ENCODE measurements at regions of chr13 and their contacts with region 1.

Region 1: DNA sequence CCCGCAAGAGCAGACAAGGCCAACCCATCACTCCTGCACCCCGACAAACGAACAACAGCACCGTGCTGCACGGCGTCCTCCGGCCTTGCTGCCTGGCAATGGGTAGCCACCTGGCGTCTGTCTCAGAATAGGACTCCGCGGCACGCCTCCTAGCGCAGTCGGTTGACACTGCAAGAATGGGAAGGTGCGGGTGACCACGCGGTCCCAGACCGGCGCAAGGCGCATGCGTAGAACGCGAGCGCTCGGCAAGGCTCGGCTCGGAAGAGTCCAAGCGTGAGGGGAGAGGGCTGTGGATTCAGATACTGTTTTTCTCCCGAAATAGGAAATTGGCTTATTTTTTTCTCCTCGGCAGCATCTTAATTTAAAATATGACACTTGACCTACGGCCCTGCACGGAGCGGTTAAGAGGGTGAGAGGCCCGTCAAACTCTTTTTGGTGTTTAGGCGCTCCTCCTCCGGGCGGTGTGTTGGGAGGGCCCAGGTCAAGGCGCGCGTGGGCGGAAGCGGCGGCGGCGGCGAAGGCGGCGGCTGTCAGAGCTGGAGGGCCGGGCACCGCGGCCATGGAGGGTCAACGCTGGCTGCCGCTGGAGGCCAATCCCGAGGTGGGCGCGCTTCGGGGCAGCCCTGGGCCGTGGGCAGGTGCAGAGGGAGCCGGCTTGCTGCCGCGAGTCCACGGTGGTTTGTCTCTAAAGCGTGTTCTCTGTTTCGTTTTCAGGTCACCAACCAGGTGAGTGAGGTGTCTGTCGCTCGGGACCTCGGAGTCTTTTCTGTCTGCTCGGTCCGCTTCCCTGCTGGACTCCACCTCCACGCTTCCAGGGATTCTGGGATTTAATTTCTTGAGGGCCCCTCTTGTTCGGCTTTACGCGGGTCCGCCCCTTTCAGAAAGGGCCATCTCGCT is at the start of gene UCHL3:
- DNase-seq: peak; percentile 97 to 99 (median 99)
- ATAC-seq: peak; percentile 98 to 99
- H3K4me3 ChIP-seq: peak within 1 kb of the TSS; percentile 70
- H3K27ac ChIP-seq: peak within 1 kb of the TSS; percentile 49
- H3K4me1 ChIP-seq: no peaks in the 10 kb centered on the region
- H3K27me3 ChIP-seq: no peaks in the 10 kb centered on the region
- total RNA-seq, gene UCHL3: 16.2 to 25.4 (median 16.6) TPM

Region 2: DNA sequence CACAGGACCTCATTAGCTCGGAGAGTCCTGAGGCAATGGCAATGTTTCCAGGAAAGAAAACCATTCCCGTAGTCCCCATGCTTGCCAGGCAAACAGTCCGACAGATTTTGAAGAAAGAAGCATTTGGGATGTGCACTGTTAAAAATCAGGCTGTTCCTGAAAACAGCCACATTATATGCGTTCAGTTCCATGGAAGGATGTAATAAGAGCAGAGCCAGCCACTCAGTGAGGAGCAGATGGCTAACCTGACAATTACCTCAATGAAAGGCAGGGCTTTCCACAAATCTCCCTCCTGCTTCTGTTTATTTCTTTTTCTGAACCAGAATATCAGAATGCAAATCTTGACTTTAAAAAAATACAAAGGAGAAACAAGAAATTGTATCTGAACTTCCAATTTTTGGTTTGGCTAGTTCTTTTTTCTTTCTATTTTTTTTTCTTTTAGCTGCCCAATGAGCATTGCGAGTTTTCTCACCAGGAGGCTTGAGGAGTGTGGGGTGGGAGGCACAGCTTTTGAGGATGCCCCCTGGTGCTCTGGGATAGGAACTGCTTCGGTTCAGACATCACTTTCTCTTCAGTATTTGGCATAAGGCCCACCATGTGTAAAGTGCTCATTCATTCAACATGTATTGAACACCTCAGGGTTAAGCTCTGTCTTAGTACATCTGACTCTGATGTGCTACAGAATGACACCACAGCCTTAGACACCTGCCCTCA is 191.8 kb before region 1 on chr13:
- intact Hi-C with region 1: loop called in 1 of 4 experiments (anchors 10 kb)
- DNase-seq: peak in 2 of 3 donors; percentile 28 to 45
- ATAC-seq: peak; percentile 58 to 73
- H3K4me3 ChIP-seq: no peak overlapping the region
- H3K27ac ChIP-seq: no peak overlapping the region
- H3K4me1 ChIP-seq: no peaks in the 10 kb centered on the region
- H3K27me3 ChIP-seq: no peaks in the 10 kb centered on the region

Region 3: GRCh38 chr13:75587679-75588078 is 38.2 kb after region 1 on chr13:
- intact Hi-C with region 1: no loop called
- DNase-seq: no peak
- ATAC-seq: no peak
- H3K4me3 ChIP-seq: no peak overlapping the region
- H3K27ac ChIP-seq: no peak overlapping the region
- H3K4me1 ChIP-seq: no peaks in the 10 kb centered on the region
- H3K27me3 ChIP-seq: no peaks in the 10 kb centered on the region